WTC11 (cell line): ENCODE measurements at regions of chr2 and their contacts with region 1.

Region 1: GRCh38 chr2:149040451-149040850 is 2.0 kb downstream of the LYPD6B start:
- DNase-seq: peak; percentile 87
- ATAC-seq: peak; percentile 29
- H3K4me3 Mint-ChIP-seq: peak overlapping the region; percentile 45; the same call in 1 of the 2 replicates
- H3K27ac Mint-ChIP-seq: no peak overlapping the region
- H3K4me1 Mint-ChIP-seq: peaks cover 4% of the 10 kb centered on the region; the same call in 1 of the 2 replicates
- H3K27me3 Mint-ChIP-seq: peaks cover 30% of the 10 kb centered on the region
- CTCF ChIP-seq: peak; percentile 91

Region 2: DNA sequence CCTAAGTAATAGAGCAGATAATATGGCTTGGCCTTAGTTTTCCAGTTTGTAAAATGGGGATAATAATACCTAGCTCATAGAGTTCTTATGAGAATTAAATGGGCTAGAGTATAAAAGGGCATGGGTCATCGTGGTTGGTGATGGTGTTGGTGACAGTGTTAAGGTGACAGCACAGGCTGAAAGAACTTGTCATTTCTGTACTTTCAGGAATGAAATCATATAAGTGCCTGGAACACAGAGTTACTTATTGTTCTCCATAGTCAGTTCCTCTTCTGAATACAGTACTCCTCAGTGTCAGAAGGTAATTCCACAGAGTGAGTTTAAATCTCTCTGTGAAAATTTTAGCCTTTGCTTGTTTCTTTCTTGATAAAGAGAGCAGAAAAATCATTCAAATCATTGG is 123.0 kb before region 1 on chr2:
- CTCF ChIA-PET with region 1: no interaction called
- POLR2A ChIA-PET with region 1: no interaction called
- DNase-seq: no peak
- ATAC-seq: no peak
- H3K4me3 Mint-ChIP-seq: no peak overlapping the region
- H3K27ac Mint-ChIP-seq: no peak overlapping the region
- H3K4me1 Mint-ChIP-seq: peaks cover 32% of the 10 kb centered on the region
- H3K27me3 Mint-ChIP-seq: no peaks in the 10 kb centered on the region; the same call in 1 of the 2 replicates
- CTCF ChIP-seq: no peak

Region 3: DNA sequence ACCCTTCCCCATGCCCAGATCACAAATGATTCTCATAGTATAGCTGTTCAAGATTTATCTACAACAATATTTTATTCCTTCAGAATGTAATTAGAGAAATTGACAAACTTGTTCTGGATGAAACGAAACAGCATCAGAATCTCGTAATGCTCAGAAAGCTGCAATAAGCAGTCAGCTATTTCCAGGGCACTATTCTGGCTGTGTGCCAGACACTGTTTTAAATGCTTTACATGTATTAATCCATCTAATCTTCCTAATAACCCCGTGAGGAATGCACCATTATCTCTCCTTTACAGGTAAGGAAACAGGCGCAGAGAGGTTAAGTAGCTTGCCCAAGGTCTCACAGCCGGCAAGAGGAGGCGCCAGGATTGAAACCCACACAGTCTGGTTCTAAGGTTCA is 12.1 kb before region 1 on chr2:
- CTCF ChIA-PET with region 1: interaction called, 11 read pairs
- POLR2A ChIA-PET with region 1: no interaction called
- DNase-seq: no peak
- ATAC-seq: no peak
- H3K4me3 Mint-ChIP-seq: no peak overlapping the region
- H3K27ac Mint-ChIP-seq: no peak overlapping the region
- H3K4me1 Mint-ChIP-seq: peaks cover 37% of the 10 kb centered on the region
- H3K27me3 Mint-ChIP-seq: no peaks in the 10 kb centered on the region
- CTCF ChIP-seq: no peak

Region 4: GRCh38 chr2:149112713-149113112 is 72.3 kb after region 1 on chr2:
- CTCF ChIA-PET with region 1: no interaction called
- POLR2A ChIA-PET with region 1: no interaction called
- DNase-seq: no peak
- ATAC-seq: no peak
- H3K4me3 Mint-ChIP-seq: no peak overlapping the region
- H3K27ac Mint-ChIP-seq: no peak overlapping the region
- H3K4me1 Mint-ChIP-seq: no peaks in the 10 kb centered on the region
- H3K27me3 Mint-ChIP-seq: no peaks in the 10 kb centered on the region
- CTCF ChIP-seq: no peak

Region 5: GRCh38 chr2:149313512-149313972 is 273.1 kb after region 1 on chr2:
- CTCF ChIA-PET with region 1: interaction called, 31 read pairs
- POLR2A ChIA-PET with region 1: no interaction called
- DNase-seq: peak; percentile 48
- ATAC-seq: peak; percentile 89
- H3K4me3 Mint-ChIP-seq: 0 out of 2 replicates have a peak overlapping the region, but pooled peaks have one; percentile 2
- H3K27ac Mint-ChIP-seq: no peak overlapping the region
- H3K4me1 Mint-ChIP-seq: peaks cover 34% of the 10 kb centered on the region
- H3K27me3 Mint-ChIP-seq: no peaks in the 10 kb centered on the region; the same call in 1 of the 2 replicates
- CTCF ChIP-seq: peak; percentile 77

Region 6: DNA sequence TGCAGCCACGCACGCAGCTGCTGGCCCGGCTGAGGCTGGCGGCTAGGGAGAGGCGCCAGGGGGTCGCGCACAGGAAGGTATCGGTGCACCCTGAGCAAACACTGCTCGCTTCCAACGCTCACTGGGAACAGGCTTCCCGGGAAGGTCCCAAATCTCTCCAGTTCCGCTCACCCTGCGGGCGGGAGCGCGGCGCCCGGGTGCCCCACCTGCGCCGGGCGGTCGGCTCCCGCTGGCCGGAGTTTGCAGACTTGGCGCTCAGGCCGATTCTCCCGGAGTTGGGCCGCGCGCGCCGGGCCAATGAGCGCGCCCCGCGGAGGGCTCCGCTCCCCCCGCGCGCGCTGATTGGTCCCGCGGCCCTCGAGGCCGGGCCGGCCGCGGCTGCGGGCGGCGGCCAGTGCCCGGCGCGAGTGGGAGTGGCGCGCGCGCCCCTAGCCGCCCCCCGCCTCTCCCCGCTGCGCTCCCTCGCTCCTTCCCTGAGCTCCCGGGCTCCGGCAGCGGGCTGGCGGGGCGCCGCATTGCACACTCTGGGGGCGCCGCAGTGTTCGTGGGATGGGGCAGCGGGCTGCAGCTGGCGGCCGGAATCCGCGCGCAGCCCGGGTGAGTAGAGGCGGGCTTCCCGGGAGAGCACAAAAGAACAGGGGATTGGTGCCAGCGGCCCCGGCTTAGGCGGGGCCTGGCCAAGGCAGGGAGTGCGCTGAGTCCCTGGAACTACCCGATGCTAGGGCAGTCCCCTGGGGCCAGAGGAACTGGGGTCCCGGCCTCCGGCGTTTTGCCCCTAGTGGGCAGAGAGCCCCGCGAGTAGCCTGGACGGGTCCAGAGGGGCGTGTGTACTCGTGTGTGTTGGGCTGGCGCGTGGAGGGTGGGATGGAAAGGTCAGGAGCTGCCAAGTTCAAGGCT is 289.9 kb after region 1 on chr2 and contains the start of gene LYPD6:
- CTCF ChIA-PET with region 1: interaction called, 16 read pairs
- POLR2A ChIA-PET with region 1: no interaction called
- DNase-seq: peak; percentile 71
- ATAC-seq: peak; percentile 83
- H3K4me3 Mint-ChIP-seq: peak within 1 kb of the TSS; percentile 80
- H3K27ac Mint-ChIP-seq: no peak within 1 kb of the TSS; the same call in 1 of the 2 replicates
- H3K4me1 Mint-ChIP-seq: peaks cover 27% of the 10 kb centered on the region
- H3K27me3 Mint-ChIP-seq: peaks cover 20% of the 10 kb centered on the region
- CTCF ChIP-seq: no peak
- total RNA-seq, gene LYPD6: 4.8 to 5.1 TPM (median 5.0 TPM) in 3 replicates